AG04449 (cell line): ENCODE measurements at regions of chr15 and their contacts with region 1.

Region 1: GRCh38 chr15:94119923-94120775 is 111.2 kb upstream of the MCTP2 start:
- DNase-seq: peak; percentile 73
- H3K4me3 ChIP-seq: no peak overlapping the region
- CTCF ChIP-seq: peak; percentile 94

Region 2: GRCh38 chr15:93072411-93073394 is 1047.4 kb before region 1 on chr15:
- CTCF ChIA-PET with region 1: interaction called, 14 read pairs
- POLR2A ChIA-PET with region 1: no interaction called
- DNase-seq: no peak
- H3K4me3 ChIP-seq: peak overlapping the region; percentile 72
- CTCF ChIP-seq: no peak

Region 3: DNA sequence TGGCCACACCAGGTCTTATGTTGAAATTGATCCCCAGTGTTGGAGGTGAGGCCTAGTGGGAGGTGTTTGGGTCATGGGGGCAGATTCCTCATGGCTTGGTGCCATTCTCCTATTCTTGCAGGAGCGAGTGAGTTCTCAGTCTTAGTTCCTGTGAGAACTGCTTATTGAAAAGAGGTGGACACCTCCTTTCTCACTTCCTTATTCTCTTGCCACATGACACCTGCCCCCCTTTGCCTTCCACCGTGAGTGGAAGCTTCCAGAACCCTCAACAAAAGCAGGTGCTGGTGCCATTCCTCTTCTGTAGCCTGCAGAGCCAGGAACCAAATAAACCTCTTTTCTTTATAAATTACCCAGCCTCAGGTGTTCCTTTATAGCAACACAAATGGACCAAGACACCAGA is 206.8 kb before region 1 on chr15:
- CTCF ChIA-PET with region 1: no interaction called
- POLR2A ChIA-PET with region 1: no interaction called
- DNase-seq: no peak
- H3K4me3 ChIP-seq: no peak overlapping the region
- CTCF ChIP-seq: no peak

Region 4: DNA sequence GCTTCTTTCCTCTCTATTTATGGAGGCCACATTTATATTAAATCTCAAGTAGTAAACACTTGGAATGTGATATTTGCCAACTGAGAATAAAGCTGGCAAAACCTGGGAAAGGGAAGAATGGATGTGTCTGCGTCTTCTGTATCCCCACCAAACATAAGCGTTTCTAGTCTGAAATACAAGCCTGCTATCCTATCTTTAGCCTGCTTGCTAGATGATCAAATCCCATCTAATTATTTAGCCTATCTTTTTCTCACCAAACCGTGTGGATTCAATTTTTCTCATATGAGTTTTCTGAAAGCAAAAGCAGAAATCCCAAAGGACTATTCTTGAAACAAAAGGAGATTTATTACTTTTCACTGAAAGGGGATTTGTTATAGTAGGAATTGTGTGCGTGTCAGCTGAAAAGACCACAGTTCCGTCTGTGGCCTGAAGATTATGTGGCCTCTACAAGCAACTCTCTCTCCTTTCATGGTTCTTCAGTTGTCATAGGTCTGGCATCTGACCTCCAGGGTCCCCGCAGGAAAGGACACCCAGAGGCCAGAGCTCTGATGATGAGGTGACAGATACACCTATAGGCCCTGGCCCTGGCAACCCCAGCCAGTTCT is 154.7 kb before region 1 on chr15:
- CTCF ChIA-PET with region 1: interaction called, 10 read pairs
- POLR2A ChIA-PET with region 1: no interaction called
- DNase-seq: no peak
- H3K4me3 ChIP-seq: no peak overlapping the region
- CTCF ChIP-seq: no peak

Region 5: DNA sequence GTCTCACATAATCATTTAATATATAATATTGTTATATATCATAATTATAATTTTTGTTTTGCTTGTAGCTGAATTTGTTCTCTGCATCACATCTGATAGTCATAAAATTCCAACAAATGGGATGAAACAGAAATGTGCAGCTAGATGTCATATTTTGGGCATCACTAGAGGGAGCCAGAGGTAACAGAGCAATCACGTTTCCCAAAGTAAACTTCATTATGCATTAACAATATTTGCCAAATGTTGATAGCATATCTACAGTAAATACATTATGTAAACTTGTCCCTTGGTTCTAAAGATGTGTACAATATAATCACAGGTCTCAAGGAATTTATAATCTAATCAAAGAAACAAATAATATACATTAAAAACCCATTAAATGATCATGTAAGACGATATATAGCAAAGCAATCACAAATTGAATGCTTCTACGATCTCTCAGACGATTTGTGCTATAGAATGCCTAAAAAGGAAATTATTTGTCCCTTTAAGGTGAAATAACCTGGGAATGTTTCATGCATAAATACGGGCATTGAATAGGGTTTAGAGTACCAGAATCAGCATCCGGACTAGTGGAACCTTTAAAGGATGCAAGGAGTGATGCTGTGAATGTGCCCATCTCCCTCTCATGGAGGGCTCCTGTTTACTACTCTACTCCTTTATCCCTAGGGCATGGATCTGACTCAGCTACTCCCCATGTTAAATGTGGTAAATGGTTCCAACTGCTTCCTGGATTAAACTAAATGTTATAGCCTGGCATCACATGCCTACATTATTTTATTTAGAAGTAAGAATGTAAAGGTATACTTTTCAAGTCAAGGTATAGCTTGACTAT is 122.8 kb before region 1 on chr15:
- CTCF ChIA-PET with region 1: interaction called, 143 read pairs
- POLR2A ChIA-PET with region 1: no interaction called
- DNase-seq: no peak
- H3K4me3 ChIP-seq: no peak overlapping the region
- CTCF ChIP-seq: peak; percentile 71

Region 6: DNA sequence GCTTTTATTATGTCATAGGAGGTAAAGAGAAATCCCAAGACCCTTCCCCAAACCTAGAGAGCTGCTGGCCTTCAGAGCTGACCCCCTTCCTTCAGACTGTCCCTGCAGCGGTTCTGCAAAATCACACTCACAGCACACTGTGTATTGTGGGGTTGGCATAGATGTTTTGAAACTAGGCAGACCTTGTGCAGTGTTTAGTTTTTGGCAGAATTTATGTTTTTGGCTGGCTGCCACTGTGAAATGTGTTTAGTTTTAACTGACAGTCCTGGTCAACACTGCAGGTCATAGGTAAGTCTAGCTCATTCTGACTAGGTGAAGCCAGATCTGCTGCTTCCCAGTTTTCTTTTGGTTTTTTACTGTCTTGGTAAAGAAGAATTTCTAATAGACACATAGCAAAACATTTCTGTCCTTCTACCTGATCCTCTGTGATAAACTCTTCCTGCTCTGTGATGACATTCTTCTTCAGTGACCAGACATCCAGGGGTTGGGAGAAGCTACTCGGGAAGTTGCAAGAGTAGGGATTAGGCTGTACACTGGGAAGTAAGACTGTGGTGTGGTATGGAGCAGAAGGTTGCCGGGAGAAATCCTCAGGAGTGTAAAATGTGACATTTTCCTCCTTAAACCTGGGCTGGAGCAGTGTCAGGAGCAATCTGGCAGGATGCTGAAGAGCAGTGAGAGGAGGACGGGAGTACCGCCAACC is 98.4 kb before region 1 on chr15:
- CTCF ChIA-PET with region 1: interaction called, 16 read pairs
- POLR2A ChIA-PET with region 1: no interaction called
- DNase-seq: no peak
- H3K4me3 ChIP-seq: no peak overlapping the region
- CTCF ChIP-seq: no peak

Region 7: DNA sequence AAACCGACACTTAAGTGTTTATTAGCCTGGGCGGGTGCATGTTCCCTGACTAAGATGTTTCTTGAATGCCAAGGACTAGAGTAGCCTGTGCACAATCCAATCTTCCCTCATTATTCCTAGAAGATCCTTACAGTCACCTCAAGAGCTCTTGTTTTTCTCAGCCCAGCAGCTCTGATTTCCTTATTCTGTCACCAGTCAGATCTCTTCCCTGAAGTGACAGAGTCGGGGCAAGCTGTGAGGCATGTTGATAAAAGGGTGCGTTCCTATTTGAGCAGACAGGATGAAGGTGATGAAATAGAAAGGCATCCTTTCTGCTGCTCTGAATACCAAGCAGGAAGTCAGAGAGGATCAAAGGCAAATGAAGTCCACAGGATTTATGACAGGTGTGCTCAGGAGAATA is 14.4 kb before region 1 on chr15:
- CTCF ChIA-PET with region 1: interaction called, 30 read pairs
- POLR2A ChIA-PET with region 1: no interaction called
- DNase-seq: no peak
- H3K4me3 ChIP-seq: no peak overlapping the region
- CTCF ChIP-seq: no peak